HEK293 (cell line): ENCODE measurements at regions of chr12 and their contacts with region 1.

Region 1: DNA sequence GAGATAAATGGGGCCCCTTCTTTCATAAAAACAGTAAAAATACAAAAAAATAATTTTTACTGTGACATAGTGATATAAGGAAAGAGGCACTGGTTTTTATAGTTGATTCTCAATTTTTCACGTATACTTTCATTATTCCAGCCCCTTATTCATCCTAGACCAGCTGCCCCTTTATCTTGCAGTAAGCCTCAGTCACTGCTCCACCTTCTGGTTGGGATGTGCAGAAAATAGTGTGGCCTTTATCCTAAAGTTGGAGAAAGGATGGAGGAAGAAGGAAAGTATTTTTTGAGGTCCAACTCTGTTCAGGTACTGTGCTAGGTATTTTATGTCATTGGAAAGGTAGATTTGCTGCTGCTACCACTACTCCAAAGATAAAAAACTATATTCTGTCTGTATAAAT is 172.7 kb downstream of the ANO6 start:
- H3K4me3 ChIP-seq: no peak overlapping the region
- H3K27ac ChIP-seq: no peak overlapping the region
- H3K4me1 ChIP-seq: no peaks in the 10 kb centered on the region
- CTCF ChIP-seq: no peak

Region 2: GRCh38 chr12:45170456-45171042 is 218.0 kb before region 1 on chr12:
- CTCF ChIA-PET with region 1: interaction called, 13 read pairs
- POLR2A ChIA-PET with region 1: no interaction called
- H3K4me3 ChIP-seq: no peak overlapping the region
- H3K27ac ChIP-seq: no peak overlapping the region
- H3K4me1 ChIP-seq: no peaks in the 10 kb centered on the region
- CTCF ChIP-seq: peak; percentile 58

Region 3: DNA sequence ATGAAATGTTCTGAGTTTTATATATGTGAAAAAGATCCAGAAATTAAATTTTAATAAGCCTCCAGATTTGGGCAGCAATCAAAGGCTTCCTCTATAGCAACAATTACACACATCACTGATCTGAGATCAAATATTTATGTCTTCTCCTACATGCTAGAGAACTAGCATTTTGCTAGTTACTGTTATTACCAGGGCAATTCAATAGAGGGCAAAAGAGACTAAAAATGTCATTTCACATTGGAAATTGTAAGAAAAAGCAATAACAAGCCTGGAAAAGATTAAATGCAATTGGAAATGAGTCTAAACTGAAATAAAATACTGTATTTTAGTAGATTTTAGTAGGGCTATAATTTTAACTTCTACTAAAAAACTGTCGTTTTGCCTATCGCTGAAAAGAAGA is 205.3 kb before region 1 on chr12:
- CTCF ChIA-PET with region 1: interaction called, 11 read pairs
- POLR2A ChIA-PET with region 1: no interaction called
- H3K4me3 ChIP-seq: no peak overlapping the region
- H3K27ac ChIP-seq: no peak overlapping the region
- H3K4me1 ChIP-seq: no peaks in the 10 kb centered on the region
- CTCF ChIP-seq: no peak

Region 4: DNA sequence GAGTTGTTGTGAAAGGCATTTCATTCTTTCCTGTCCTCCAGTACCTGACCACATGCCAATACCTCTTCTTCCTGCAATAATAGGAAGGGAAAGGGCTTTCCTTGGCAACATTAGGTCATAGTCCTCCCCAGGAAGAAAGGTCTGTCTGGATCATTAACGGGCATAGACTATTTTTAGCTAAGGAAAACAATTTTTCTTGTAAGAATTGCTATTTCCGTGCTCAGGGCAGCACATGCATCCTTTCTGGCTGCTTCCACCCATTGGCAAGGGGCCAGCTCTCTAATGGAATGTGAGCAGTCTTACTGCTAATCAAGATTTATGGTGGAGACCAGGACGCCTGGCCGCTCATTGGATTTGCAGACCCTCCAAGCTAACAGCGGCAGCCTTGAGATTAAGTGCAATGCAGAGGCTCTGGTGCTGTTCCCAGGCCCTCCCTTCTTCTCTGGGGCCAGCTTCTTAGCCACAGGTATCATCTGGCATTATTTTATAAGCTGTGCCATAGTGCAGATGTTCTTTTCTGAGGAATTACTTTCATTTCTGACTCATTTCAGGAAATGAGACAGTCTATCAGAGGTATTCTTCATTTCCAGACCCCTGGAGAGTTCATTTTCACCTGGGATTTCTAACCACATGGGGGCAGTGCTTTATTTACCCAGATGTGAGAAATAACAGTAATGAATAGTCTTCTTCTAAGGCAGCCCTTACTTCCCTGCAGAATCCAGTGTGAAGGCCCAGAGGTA is 119.7 kb before region 1 on chr12:
- CTCF ChIA-PET with region 1: interaction called, 12 read pairs
- POLR2A ChIA-PET with region 1: no interaction called
- H3K4me3 ChIP-seq: peak overlapping the region; percentile 17
- H3K27ac ChIP-seq: peak overlapping the region; percentile 56
- H3K4me1 ChIP-seq: peaks cover 16% of the 10 kb centered on the region
- CTCF ChIP-seq: peak; percentile 42; the same call in 1 of the 2 replicates

Region 5: GRCh38 chr12:45324391-45324790 is 64.2 kb before region 1 on chr12:
- CTCF ChIA-PET with region 1: no interaction called
- POLR2A ChIA-PET with region 1: no interaction called
- H3K4me3 ChIP-seq: no peak overlapping the region
- H3K27ac ChIP-seq: no peak overlapping the region
- H3K4me1 ChIP-seq: no peaks in the 10 kb centered on the region
- CTCF ChIP-seq: no peak